HepG2 (cell line): ENCODE measurements at regions of chr18 and their contacts with region 1.

Region 1: GRCh38 chr18:62131301-62131909 is 55.5 kb downstream of the PIGN start:
- DNase-seq: peak; percentile 55
- ATAC-seq: peak; percentile 65
- H3K4me3 ChIP-seq: no peak overlapping the region
- H3K27ac ChIP-seq: no peak overlapping the region
- H3K4me1 ChIP-seq: no peaks in the 10 kb centered on the region
- H3K27me3 ChIP-seq: no peaks in the 10 kb centered on the region
- CTCF ChIP-seq: peak; percentile 82
- EP300 ChIP-seq: no peak
- POLR2A ChIP-seq: no peak
- RAD21 ChIP-seq: peak; percentile 74

Region 2: DNA sequence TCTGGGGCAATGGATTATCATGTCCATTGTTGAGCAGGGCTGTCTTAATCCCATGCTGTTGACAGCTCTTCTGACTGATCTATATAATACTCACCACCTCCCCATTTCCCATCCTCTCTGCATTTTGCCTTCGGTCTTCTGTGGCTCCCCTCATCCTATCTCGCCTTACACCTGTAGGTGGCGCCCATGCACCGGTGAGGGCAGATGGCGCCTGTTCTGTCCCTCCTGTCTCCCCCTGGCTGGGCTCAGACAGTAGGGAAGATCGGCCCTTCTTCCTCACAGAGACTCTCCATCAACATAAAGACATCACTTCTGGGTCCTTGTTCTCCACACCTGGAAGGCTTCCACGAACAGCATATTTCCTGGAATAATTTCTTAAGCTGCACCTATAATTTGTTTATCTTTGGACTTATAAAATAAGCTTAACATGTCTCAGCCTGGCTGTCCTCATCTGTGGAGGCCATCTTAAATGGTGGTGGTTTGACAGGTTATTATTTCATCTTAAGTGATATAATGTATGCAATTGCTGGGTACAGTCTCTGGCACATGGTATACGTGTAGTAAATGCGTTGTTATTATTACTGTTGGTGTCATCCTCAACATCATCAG is 809.0 kb before region 1 on chr18:
- CTCF ChIA-PET with region 1: interaction called, 3 read pairs
- POLR2A ChIA-PET with region 1: no interaction called
- in situ Hi-C with region 1: no loop called
- intact Hi-C with region 1: loop called (anchors 5 kb)
- DNase-seq: peak; percentile 42
- ATAC-seq: peak; percentile 100
- H3K4me3 ChIP-seq: no peak overlapping the region
- H3K27ac ChIP-seq: no peak overlapping the region
- H3K4me1 ChIP-seq: no peaks in the 10 kb centered on the region
- H3K27me3 ChIP-seq: no peaks in the 10 kb centered on the region
- CTCF ChIP-seq: peak; percentile 88
- EP300 ChIP-seq: no peak
- POLR2A ChIP-seq: no peak
- RAD21 ChIP-seq: peak; percentile 57

Region 3: GRCh38 chr18:61551586-61551985 is 579.8 kb before region 1 on chr18:
- CTCF ChIA-PET with region 1: interaction called, 7 read pairs
- POLR2A ChIA-PET with region 1: no interaction called
- in situ Hi-C with region 1: no loop called
- intact Hi-C with region 1: loop called (anchors 1 kb)
- DNase-seq: peak; percentile 46
- ATAC-seq: peak; percentile 80
- H3K4me3 ChIP-seq: no peak overlapping the region
- H3K27ac ChIP-seq: no peak overlapping the region
- H3K4me1 ChIP-seq: no peaks in the 10 kb centered on the region
- H3K27me3 ChIP-seq: no peaks in the 10 kb centered on the region
- CTCF ChIP-seq: peak; percentile 57
- EP300 ChIP-seq: no peak
- POLR2A ChIP-seq: no peak
- RAD21 ChIP-seq: no peak

Region 4: GRCh38 chr18:61581578-61582201 is 549.7 kb before region 1 on chr18:
- CTCF ChIA-PET with region 1: interaction called, 11 read pairs
- POLR2A ChIA-PET with region 1: no interaction called
- in situ Hi-C with region 1: no loop called
- intact Hi-C with region 1: loop called (anchors 1 kb)
- DNase-seq: peak; percentile 14
- ATAC-seq: peak; percentile 100
- H3K4me3 ChIP-seq: peak overlapping the region in 1 of 3 experiments; percentile 26; a peak in 1 of 6 replicates
- H3K27ac ChIP-seq: no peak overlapping the region
- H3K4me1 ChIP-seq: no peaks in the 10 kb centered on the region
- H3K27me3 ChIP-seq: 0 out of 5 replicates have a peak, but pooled peaks cover 0 to 4% of the 10 kb centered on the region in 2 experiments
- CTCF ChIP-seq: peak; percentile 92
- EP300 ChIP-seq: no peak
- POLR2A ChIP-seq: no peak
- RAD21 ChIP-seq: peak; percentile 68

Region 5: GRCh38 chr18:61635901-61636528 is 495.4 kb before region 1 on chr18:
- CTCF ChIA-PET with region 1: interaction called, 15 read pairs
- POLR2A ChIA-PET with region 1: no interaction called
- in situ Hi-C with region 1: loop called (anchors 10 kb)
- intact Hi-C with region 1: no loop called
- DNase-seq: peak; percentile 18
- ATAC-seq: peak; percentile 85
- H3K4me3 ChIP-seq: no peak overlapping the region
- H3K27ac ChIP-seq: no peak overlapping the region
- H3K4me1 ChIP-seq: no peaks in the 10 kb centered on the region
- H3K27me3 ChIP-seq: no peaks in the 10 kb centered on the region
- CTCF ChIP-seq: peak; percentile 71
- EP300 ChIP-seq: no peak
- POLR2A ChIP-seq: no peak
- RAD21 ChIP-seq: 0 out of 2 replicates have a peak, but pooled peaks have one; percentile 29

Region 6: GRCh38 chr18:61901323-61901986 is 229.9 kb before region 1 on chr18:
- CTCF ChIA-PET with region 1: no interaction called
- POLR2A ChIA-PET with region 1: no interaction called
- in situ Hi-C with region 1: no loop called
- intact Hi-C with region 1: loop called (anchors 2 kb)
- DNase-seq: peak; percentile 35
- ATAC-seq: peak; percentile 89
- H3K4me3 ChIP-seq: no peak overlapping the region
- H3K27ac ChIP-seq: no peak overlapping the region
- H3K4me1 ChIP-seq: no peaks in the 10 kb centered on the region
- H3K27me3 ChIP-seq: 0 out of 5 replicates have a peak, but pooled peaks cover 0 to 4% of the 10 kb centered on the region in 2 experiments
- CTCF ChIP-seq: peak; percentile 83
- EP300 ChIP-seq: no peak
- POLR2A ChIP-seq: no peak
- RAD21 ChIP-seq: 0 out of 2 replicates have a peak, but pooled peaks have one; percentile 19

Region 7: GRCh38 chr18:62030091-62030985 is 101.1 kb before region 1 on chr18:
- CTCF ChIA-PET with region 1: no interaction called
- POLR2A ChIA-PET with region 1: no interaction called
- in situ Hi-C with region 1: no loop called
- intact Hi-C with region 1: loop called (anchors 5 kb)
- DNase-seq: no peak
- ATAC-seq: no peak
- H3K4me3 ChIP-seq: no peak overlapping the region
- H3K27ac ChIP-seq: no peak overlapping the region
- H3K4me1 ChIP-seq: no peaks in the 10 kb centered on the region
- H3K27me3 ChIP-seq: peaks cover 2 to 7% of the 10 kb centered on the region in 2 experiments; a peak in 4 of 5 replicates
- CTCF ChIP-seq: no peak
- EP300 ChIP-seq: no peak
- POLR2A ChIP-seq: no peak
- RAD21 ChIP-seq: no peak

Region 8: DNA sequence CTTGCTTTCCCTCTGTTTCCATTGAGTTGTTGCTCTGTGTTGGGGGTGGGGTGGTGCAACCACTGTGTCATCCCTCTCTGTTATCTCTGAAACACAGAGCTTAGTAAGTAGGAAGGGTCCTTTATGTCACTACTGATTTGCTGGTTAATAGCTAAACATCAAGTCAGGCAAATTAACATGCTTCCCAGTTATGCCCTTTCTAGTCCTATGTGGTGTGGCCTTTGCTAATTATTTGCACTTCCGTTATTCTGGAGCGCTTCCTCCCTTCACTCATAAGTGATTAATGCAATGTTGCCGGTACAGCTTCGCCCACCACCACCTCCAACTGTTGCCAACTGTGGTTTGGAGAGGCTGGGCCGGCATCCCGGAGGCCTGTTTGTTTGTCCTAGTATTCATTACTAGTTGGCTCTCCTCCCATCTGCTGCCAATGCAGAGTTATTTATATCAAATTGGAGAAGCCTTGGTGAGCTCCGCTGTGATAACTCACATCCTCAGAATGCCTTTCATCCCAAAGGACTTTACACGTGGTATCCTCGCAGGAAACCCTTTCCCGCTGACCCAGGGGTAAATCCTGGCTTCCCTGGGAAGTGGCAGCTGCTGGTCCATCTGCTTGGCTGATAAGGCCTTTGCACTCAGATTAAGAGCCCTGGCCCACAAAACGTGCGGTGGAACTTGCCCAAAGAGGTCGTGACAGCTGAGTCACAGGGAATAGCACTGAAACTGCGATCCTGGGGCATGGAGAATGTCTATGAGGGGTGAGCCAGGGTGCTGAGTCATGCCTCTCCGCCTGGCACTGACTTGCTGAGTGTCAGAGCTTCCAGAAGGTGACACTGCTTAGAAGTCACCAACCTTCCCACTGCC is 319.4 kb after region 1 on chr18:
- CTCF ChIA-PET with region 1: no interaction called
- POLR2A ChIA-PET with region 1: no interaction called
- in situ Hi-C with region 1: no loop called
- intact Hi-C with region 1: no loop called
- DNase-seq: peak; percentile 63
- ATAC-seq: peak; percentile 11; the same call in 2 of the 3 replicates
- H3K4me3 ChIP-seq: no peak overlapping the region; a peak in 1 of 6 replicates
- H3K27ac ChIP-seq: peak overlapping the region; percentile 86
- H3K4me1 ChIP-seq: peaks cover 81% of the 10 kb centered on the region
- H3K27me3 ChIP-seq: no peaks in the 10 kb centered on the region
- CTCF ChIP-seq: no peak
- EP300 ChIP-seq: no peak
- POLR2A ChIP-seq: no peak
- RAD21 ChIP-seq: no peak

Region 9: GRCh38 chr18:63890950-63891304 is 1759.5 kb after region 1 on chr18:
- CTCF ChIA-PET with region 1: no interaction called
- POLR2A ChIA-PET with region 1: no interaction called
- in situ Hi-C with region 1: no loop called
- intact Hi-C with region 1: no loop called
- DNase-seq: peak; percentile 51
- ATAC-seq: peak; percentile 92
- H3K4me3 ChIP-seq: no peak overlapping the region
- H3K27ac ChIP-seq: no peak overlapping the region
- H3K4me1 ChIP-seq: no peaks in the 10 kb centered on the region
- H3K27me3 ChIP-seq: 0 out of 5 replicates have a peak, but pooled peaks cover 0 to 3% of the 10 kb centered on the region in 2 experiments
- CTCF ChIP-seq: peak; percentile 63
- EP300 ChIP-seq: no peak
- POLR2A ChIP-seq: no peak
- RAD21 ChIP-seq: no peak